ENCODE measurements at regions of chr5 and their contacts with region 1.

Region 1: GRCh38 chr5:52948418-52949076 is 40.6 kb upstream of the ITGA2 start:
- DNase-seq: peak; percentile 52 to 81
- ATAC-seq: peak; percentile 96 to 98
- H3K4me3 ChIP-seq: no peak overlapping the region
- H3K27ac ChIP-seq: peak overlapping the region in 1 of 2 experiments; percentile 55; a peak in 1 of 6 replicates
- H3K4me1 ChIP-seq: peaks cover 13% of the 10 kb centered on the region; the same call in 2 of the 3 replicates
- CTCF ChIP-seq: peak; percentile 88
- EP300 ChIP-seq: no peak
- POLR2A ChIP-seq: no peak
- RAD21 ChIP-seq: peak; percentile 97

Region 2: GRCh38 chr5:52725065-52725746 is 223.3 kb before region 1 on chr5:
- CTCF ChIA-PET with region 1: no interaction called
- POLR2A ChIA-PET with region 1: no interaction called
- DNase-seq: no peak
- ATAC-seq: no peak
- H3K4me3 ChIP-seq: no peak overlapping the region
- H3K27ac ChIP-seq: no peak overlapping the region
- H3K4me1 ChIP-seq: no peaks in the 10 kb centered on the region
- CTCF ChIP-seq: no peak
- EP300 ChIP-seq: no peak
- POLR2A ChIP-seq: no peak
- RAD21 ChIP-seq: no peak

Region 3: DNA sequence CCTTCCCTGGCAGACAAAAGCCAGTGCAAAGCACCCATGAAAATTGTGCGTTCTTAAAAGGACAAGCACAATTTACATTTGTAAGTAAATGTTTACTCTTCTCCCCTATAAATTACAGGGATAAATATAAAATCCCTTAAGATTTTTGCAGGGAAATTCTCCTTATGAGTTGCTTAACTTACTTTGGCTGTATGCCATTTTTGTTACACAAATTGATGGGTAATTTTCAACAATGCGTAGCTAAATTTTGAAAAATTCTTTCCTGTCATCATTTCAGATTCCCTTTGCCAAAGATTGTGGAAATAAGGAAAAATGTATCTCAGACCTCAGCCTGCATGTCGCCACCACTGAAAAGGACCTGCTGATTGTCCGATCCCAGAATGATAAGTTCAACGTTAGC is 23.5 kb before region 1 on chr5:
- CTCF ChIA-PET with region 1: no interaction called
- POLR2A ChIA-PET with region 1: no interaction called
- DNase-seq: no peak
- ATAC-seq: no peak
- H3K4me3 ChIP-seq: no peak overlapping the region
- H3K27ac ChIP-seq: no peak overlapping the region
- H3K4me1 ChIP-seq: 0 out of 3 replicates have a peak, but pooled peaks cover 4% of the 10 kb centered on the region
- CTCF ChIP-seq: no peak
- EP300 ChIP-seq: no peak
- POLR2A ChIP-seq: no peak
- RAD21 ChIP-seq: no peak

Region 4: DNA sequence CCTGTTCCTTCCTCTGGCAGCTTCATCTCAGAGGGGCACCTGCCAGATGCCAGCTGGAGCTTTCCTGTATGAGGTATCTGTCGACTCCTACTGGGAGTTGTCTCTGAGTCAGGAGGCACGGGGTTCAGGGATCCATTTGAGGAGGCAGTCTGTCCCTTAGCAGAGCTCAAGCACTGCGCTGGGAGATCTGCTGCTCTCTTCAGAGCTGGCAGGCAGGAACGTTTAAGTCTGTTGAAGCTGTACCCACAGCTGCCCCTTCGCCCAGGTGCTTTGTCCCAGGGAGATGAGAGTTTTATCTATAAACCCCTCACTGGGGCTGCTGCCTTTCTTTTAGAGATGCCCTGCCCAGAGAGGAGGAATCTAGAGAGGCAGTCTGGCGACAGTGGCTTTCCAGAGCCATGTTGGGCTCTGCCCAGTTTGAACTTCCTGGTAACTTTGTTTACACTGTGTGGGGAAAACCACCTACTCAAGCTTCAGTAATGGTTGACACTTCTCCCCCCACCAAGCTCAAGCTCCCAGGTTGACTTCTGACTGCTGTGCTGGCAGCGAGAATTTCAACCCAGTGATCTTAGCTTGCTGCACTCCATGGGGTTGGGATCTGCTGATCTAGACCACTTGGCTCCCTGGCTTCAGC is 28.8 kb after region 1 on chr5:
- CTCF ChIA-PET with region 1: interaction called, 14 read pairs
- POLR2A ChIA-PET with region 1: no interaction called
- DNase-seq: no peak
- ATAC-seq: no peak
- H3K4me3 ChIP-seq: no peak overlapping the region
- H3K27ac ChIP-seq: no peak overlapping the region
- H3K4me1 ChIP-seq: no peaks in the 10 kb centered on the region
- CTCF ChIP-seq: no peak
- EP300 ChIP-seq: no peak
- POLR2A ChIP-seq: no peak
- RAD21 ChIP-seq: no peak

Region 5: DNA sequence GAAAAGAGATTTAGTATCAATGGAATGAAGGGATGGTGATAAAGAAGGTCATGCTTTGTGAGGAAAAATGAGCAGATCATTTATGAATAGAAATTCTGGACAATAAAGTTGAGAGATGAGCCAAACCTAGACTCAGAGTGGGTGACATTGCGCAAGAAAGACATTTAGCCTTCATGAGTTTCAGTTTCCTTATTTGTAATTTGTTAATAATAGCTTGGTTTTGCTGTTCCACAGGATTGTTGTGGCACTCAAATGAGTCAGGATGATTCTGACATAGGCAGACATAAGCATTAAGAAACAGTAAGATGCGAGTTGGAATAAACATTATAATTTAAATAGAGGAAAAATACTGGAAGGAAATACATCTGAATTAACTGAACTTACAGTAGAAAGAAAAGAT is 75.4 kb after region 1 on chr5:
- CTCF ChIA-PET with region 1: interaction called, 19 read pairs
- POLR2A ChIA-PET with region 1: no interaction called
- DNase-seq: peak in 1 of 2 experiments; percentile 26
- ATAC-seq: no peak
- H3K4me3 ChIP-seq: no peak overlapping the region
- H3K27ac ChIP-seq: no peak overlapping the region; a peak in 1 of 6 replicates
- H3K4me1 ChIP-seq: peaks cover 61% of the 10 kb centered on the region
- CTCF ChIP-seq: no peak
- EP300 ChIP-seq: no peak
- POLR2A ChIP-seq: no peak
- RAD21 ChIP-seq: no peak

Region 6: GRCh38 chr5:53048248-53048647 is 99.7 kb after region 1 on chr5:
- CTCF ChIA-PET with region 1: interaction called, 14 read pairs
- POLR2A ChIA-PET with region 1: no interaction called
- DNase-seq: no peak
- ATAC-seq: no peak
- H3K4me3 ChIP-seq: no peak overlapping the region
- H3K27ac ChIP-seq: no peak overlapping the region
- H3K4me1 ChIP-seq: no peaks in the 10 kb centered on the region
- CTCF ChIP-seq: no peak
- EP300 ChIP-seq: no peak
- POLR2A ChIP-seq: no peak
- RAD21 ChIP-seq: no peak

Region 7: DNA sequence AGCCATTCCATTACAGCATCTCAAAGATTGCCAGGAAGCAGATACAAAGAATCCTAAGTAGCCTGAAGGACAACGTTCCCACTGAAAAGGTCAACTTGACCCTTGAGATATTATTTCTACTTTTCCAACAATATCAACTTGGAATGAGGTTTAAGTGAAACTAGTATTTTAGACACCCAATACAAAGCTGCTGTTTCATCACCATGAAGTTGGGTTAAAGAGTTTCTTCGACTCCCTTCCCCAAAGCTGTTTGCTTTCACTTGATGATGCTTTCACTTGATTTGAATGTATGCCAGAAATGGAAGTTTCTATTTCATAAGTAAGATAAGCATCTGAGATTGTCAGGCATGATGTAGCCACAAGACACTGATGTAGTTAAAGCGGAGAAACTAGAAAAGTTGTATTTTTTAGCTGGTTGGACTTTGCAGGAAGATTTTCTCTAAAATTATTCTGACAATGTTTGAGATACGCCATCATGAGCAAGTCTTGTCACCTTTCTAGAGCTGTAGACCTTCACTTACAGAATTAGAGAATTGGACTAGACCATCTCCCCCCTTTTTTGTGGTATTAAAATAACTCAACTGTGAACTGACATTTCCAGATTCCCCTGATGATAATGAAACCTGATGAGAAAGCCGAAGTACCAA is 140.9 kb after region 1 on chr5:
- CTCF ChIA-PET with region 1: interaction called, 124 read pairs
- POLR2A ChIA-PET with region 1: interaction called, 4 read pairs
- DNase-seq: no peak
- ATAC-seq: no peak
- H3K4me3 ChIP-seq: no peak overlapping the region
- H3K27ac ChIP-seq: no peak overlapping the region
- H3K4me1 ChIP-seq: peaks cover 31% of the 10 kb centered on the region
- CTCF ChIP-seq: no peak
- EP300 ChIP-seq: no peak
- POLR2A ChIP-seq: no peak
- RAD21 ChIP-seq: no peak

Region 8: GRCh38 chr5:53114988-53115387 is 166.4 kb after region 1 on chr5:
- CTCF ChIA-PET with region 1: interaction called, 17 read pairs
- POLR2A ChIA-PET with region 1: no interaction called
- DNase-seq: peak in 1 of 2 experiments; percentile 31
- ATAC-seq: peak in 1 of 2 experiments; percentile 43; a peak in 1 of 6 replicates
- H3K4me3 ChIP-seq: no peak overlapping the region
- H3K27ac ChIP-seq: no peak overlapping the region
- H3K4me1 ChIP-seq: peaks cover 7% of the 10 kb centered on the region; the same call in 2 of the 3 replicates
- CTCF ChIP-seq: peak; percentile 32
- EP300 ChIP-seq: no peak
- POLR2A ChIP-seq: no peak
- RAD21 ChIP-seq: no peak